OCI-LY7 (cell line): ENCODE measurements at regions of chr19 and their contacts with region 1.

Region 1: GRCh38 chr19:17075035-17075863 is at the starts of genes HAUS8 and MYO9B:
- DNase-seq: peak; percentile 100
- H3K4me3 ChIP-seq: peak within 1 kb of the TSS; percentile 84
- H3K27ac ChIP-seq: peak within 1 kb of the TSS; percentile 89
- H3K4me1 ChIP-seq: peaks cover 53% of the 10 kb centered on the region
- CTCF ChIP-seq: no peak
- total RNA-seq, gene HAUS8: 47.3 and 50.7 TPM in 2 replicates
- total RNA-seq, gene MYO9B: 74.7 and 84.9 TPM in 2 replicates

Region 2: DNA sequence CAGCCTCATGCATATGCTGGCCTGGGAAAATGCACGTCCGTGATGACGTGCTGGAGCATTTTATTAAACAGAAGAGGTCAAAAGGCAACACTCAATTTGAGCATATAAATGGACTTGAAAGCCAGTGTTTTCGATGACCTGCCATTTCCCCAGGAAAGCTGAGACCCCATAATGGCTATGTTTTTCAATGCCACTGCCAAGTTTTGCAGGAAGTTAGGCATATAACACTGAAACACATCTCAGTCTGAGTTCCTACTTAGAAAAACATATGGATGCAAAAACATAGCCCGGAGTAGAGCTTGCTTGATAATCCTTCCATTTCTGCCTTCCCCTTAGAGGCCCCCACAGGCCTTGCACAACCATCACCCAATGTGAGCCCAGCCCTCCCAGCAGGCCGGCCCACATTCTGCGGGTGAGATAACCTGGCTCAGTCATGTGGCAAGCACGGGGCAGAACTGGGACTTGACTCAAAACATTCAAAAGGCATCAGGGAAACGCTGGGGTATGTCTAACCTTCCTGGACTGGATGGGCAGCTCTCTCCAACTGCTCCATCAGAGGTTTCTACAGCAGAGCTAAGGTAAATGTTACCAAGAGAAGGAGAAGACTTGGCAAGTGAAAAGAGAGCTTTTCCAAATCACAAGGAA is 628.4 kb before region 1 on chr19:
- CTCF ChIA-PET with region 1: no interaction called
- POLR2A ChIA-PET with region 1: no interaction called
- intact Hi-C with region 1: loop called (anchors 10 kb)
- DNase-seq: peak; percentile 81
- H3K4me3 ChIP-seq: peak overlapping the region; percentile 48
- H3K27ac ChIP-seq: peak overlapping the region; percentile 96
- H3K4me1 ChIP-seq: peaks cover 95% of the 10 kb centered on the region
- CTCF ChIP-seq: no peak

Region 3: GRCh38 chr19:17114414-17114831 is 39.2 kb after region 1 on chr19:
- CTCF ChIA-PET with region 1: no interaction called
- POLR2A ChIA-PET with region 1: no interaction called
- intact Hi-C with region 1: no loop called
- DNase-seq: no peak
- H3K4me3 ChIP-seq: no peak overlapping the region
- H3K27ac ChIP-seq: no peak overlapping the region
- H3K4me1 ChIP-seq: peaks cover 13% of the 10 kb centered on the region
- CTCF ChIP-seq: no peak

Region 4: DNA sequence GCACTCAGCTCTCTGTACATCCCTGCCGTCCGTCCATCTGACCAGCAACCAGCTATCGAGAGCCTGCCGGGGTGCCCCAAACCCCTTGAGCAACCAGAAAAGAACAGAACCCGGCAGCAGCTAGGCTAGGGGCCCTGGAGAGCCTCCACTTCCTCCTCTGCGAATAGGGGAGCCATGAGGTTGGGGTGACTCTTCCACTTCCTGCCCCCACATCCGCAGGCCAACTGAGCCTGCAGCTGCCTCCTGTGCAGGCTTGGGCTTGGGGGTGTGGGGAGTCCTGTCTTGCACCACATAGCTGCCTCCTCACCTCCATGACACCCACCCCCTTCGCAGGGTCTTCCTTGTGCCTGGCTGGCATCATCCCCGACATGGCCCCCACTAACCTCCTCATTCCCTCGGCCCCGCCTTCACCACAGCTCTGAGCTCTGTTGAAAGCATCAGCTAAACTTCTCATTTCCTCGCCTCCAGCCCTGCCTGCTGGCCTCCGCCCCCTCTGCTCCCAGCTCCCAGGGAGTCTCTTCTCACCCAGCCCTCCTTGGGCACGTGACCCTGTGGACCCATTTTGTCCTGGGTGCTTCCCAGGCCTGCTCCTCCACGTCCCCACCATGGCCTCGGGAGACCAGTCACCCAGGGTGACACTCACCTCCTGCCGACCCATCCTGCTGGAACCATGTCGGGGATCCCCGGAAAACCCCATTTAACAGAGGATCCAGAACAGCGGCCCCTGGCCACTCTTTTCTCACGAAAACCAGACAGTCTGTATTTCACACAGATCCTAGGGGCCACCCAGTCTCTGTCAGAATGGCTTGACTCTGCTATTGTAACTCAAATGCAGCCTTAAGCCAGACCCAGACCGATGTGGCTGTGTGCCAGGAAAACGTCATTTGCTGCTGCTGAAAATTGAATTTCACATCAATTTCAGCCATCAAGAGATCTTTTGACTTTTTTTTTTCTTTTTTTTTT is 50.7 kb after region 1 on chr19:
- CTCF ChIA-PET with region 1: interaction called, 3 read pairs
- POLR2A ChIA-PET with region 1: interaction called, 6 read pairs
- intact Hi-C with region 1: loop called (anchors 1 kb)
- DNase-seq: peak; percentile 67
- H3K4me3 ChIP-seq: peak overlapping the region; percentile 56
- H3K27ac ChIP-seq: peak overlapping the region; percentile 90
- H3K4me1 ChIP-seq: peaks cover 52% of the 10 kb centered on the region
- CTCF ChIP-seq: no peak

Region 5: DNA sequence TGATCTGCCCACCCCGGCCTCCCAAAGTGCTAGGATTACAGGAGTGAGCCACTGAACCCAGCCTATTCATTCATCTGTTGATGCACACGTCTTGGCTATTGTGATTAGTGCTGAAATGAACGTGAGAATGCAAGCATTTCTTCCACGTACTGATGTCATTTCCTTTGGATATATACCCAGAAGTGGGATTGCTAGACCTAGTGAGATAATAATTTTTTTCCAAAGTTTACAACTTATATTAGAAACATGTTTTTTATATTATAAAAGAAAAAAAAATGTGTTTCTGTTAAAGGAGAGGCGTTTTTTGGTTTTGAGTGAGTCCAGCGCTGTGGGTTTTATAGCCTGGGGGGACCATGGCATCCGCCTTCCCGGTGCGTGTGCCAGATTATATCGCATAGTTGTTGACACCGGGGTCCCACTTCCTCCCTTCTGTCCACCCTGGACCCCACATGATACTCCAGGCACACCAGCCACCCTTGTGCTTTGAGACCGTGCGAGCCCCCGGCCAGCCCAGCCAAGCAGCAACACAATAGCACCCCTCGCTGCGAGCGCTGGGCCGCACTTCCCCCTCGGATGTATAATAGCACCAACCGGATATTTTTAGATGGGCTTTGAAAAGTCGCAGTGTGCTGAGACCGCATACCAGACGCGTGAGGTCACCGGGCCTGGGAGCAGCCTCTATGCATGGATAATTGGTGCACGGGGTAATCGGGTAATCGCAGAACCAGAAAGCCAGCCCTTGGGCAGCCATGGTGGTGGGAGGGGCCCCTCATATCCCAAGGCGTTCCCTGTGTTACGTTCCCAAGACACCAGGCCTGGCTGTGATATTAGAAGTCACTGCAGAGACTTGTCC is 60.0 kb after region 1 on chr19:
- CTCF ChIA-PET with region 1: no interaction called
- POLR2A ChIA-PET with region 1: interaction called, 4 read pairs
- intact Hi-C with region 1: loop called (anchors 2 kb)
- DNase-seq: peak; percentile 91
- H3K4me3 ChIP-seq: peak overlapping the region; percentile 39
- H3K27ac ChIP-seq: peak overlapping the region; percentile 74
- H3K4me1 ChIP-seq: peaks cover 57% of the 10 kb centered on the region
- CTCF ChIP-seq: peak; percentile 54; the same call in 1 of the 2 replicates

Region 6: GRCh38 chr19:17195106-17195505 is 119.9 kb after region 1 on chr19:
- CTCF ChIA-PET with region 1: no interaction called
- POLR2A ChIA-PET with region 1: no interaction called
- intact Hi-C with region 1: loop called (anchors 2 kb)
- DNase-seq: no peak
- H3K4me3 ChIP-seq: no peak overlapping the region
- H3K27ac ChIP-seq: no peak overlapping the region
- H3K4me1 ChIP-seq: peaks cover 35% of the 10 kb centered on the region
- CTCF ChIP-seq: no peak

Region 7: DNA sequence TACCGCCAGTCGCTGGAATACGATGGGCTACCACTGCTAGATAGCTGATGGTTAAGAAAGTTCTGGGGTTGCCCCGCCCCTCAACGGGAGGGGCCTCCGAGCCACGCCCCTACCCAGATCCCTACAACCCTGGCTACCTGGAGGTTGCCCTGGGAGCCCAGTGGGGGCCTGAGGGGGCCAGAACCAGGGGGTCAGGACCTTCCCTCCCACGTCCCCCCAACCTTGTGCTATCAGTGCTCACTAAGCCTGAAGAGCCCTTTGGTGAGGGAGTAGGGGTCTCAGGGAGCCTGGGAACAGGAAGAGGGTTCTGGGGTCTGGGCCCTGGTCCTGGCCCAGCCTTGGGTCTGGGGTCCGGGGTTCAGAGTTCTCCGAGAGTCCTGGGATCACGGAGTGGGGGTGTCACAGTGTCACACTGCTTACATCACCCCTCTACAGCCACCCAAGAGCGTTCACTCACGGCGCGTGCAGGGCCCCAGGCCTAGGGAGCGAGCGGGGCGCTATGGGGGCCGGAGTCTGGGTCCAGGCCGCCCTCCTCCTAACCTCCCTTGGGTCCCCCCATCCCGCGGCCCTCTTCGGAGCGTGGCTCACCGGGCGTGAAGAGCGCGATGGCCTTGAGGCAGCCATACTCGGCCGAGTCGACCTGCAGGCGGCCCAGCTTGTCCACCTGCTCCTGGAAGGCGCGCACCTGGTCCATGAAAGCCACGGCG is 159.8 kb after region 1 on chr19:
- CTCF ChIA-PET with region 1: no interaction called
- POLR2A ChIA-PET with region 1: no interaction called
- intact Hi-C with region 1: no loop called
- DNase-seq: peak; percentile 73
- H3K4me3 ChIP-seq: peak overlapping the region; percentile 69
- H3K27ac ChIP-seq: peak overlapping the region; percentile 58
- H3K4me1 ChIP-seq: peaks cover 25% of the 10 kb centered on the region
- CTCF ChIP-seq: no peak

Region 8: GRCh38 chr19:17245244-17245984 is 170.2 kb after region 1 on chr19 and contains the start of gene NR2F6:
- CTCF ChIA-PET with region 1: interaction called, 3 read pairs
- POLR2A ChIA-PET with region 1: interaction called, 3 read pairs
- intact Hi-C with region 1: loop called (anchors 2 kb)
- DNase-seq: no peak
- H3K4me3 ChIP-seq: peak within 1 kb of the TSS; percentile 74
- H3K27ac ChIP-seq: peak within 1 kb of the TSS; percentile 69
- H3K4me1 ChIP-seq: peaks cover 43% of the 10 kb centered on the region
- CTCF ChIP-seq: no peak
- total RNA-seq, gene NR2F6: 31.0 and 39.2 TPM in 2 replicates

Region 9: DNA sequence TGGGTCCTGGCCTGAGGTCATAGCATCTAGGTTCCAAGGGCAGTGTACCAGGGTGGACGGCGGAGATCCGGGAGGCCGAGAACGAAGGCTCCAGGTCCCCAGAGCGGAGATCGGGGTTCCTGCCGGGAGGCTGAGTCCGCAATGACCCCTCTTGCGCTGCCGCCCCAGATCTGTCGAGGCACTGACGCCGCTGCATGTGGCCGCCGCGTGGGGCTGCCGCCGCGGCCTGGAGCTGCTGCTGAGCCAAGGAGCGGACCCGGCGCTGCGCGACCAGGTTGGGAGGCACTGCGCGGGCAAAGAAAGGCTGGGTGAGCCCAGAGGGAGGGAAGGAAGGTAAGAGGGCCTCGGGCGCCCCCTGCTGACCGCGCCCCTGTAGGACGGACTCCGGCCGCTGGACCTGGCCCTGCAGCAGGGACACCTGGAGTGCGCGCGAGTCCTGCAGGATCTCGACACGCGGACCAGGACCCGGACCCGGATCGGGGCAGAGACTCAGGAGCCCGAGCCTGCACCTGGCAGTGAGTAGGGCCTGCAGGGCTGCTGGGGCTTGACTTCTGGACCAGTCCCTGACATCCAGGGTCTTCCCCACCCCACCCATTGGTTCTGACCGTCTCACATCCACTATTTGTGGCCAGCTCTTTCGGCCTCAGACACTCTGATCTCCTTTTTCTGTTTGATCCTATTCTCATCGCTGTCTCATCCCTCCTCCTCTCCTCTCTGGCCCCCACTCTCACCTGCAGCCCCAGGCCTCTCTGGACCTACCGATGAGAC is 207.4 kb after region 1 on chr19:
- CTCF ChIA-PET with region 1: no interaction called
- POLR2A ChIA-PET with region 1: no interaction called
- intact Hi-C with region 1: loop called (anchors 2 kb)
- DNase-seq: peak; percentile 92
- H3K4me3 ChIP-seq: peak overlapping the region; percentile 83
- H3K27ac ChIP-seq: peak overlapping the region; percentile 69
- H3K4me1 ChIP-seq: peaks cover 22% of the 10 kb centered on the region
- CTCF ChIP-seq: peak; percentile 90

Region 10: DNA sequence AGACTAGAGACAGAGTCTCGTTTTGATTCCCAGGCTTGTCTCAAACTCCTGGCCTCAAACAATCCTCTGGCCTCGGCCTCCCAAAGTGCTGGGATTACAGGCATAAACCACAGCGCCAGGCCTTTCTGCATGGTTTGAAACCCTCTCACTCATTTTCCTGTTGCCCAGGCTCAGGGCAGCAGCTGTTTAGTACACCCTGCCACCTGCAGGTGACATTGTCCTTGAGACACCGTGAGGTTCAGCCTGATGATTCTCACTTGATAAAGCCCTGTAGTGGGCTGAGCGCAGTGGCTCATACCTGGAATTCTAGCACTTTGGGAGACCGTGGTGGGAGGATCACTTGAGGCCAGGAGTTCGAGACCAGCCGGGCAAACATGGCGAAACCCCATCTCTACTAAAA is 998.9 kb after region 1 on chr19:
- CTCF ChIA-PET with region 1: no interaction called
- POLR2A ChIA-PET with region 1: no interaction called
- intact Hi-C with region 1: no loop called
- DNase-seq: no peak
- H3K4me3 ChIP-seq: no peak overlapping the region
- H3K27ac ChIP-seq: no peak overlapping the region
- H3K4me1 ChIP-seq: no peaks in the 10 kb centered on the region
- CTCF ChIP-seq: peak; percentile 33